ENCODE measurements at regions of chr13 and their contacts with region 1.

Region 1: DNA sequence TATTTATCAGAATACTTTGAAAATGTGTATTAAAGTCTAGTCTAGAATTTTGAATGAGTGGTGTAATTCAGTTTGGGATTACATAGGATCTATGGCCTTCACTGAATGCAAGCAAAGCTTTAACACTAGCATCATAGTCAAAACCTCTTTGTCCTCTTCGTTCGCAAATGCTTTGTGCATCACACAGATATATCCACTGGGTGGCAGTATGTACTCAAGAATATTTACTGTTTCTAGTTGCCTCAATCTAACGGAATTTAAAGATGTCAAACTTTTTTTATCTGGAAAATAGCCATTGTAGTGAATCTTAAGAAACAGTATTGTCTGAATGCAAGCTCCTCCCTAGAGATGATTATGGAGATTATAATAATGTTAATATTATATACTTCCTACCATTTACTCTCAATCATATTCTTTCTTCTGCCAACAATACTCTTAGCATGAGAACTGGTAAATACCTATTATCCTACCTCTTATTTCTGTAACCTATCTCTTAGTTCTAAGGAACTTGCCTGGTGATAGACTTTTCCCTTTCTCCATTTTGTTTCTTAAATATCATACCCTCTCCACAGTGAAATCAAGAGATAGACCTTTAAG is 25.8 kb downstream of the LACC1 start:
- DNase-seq: no peak

Region 2: DNA sequence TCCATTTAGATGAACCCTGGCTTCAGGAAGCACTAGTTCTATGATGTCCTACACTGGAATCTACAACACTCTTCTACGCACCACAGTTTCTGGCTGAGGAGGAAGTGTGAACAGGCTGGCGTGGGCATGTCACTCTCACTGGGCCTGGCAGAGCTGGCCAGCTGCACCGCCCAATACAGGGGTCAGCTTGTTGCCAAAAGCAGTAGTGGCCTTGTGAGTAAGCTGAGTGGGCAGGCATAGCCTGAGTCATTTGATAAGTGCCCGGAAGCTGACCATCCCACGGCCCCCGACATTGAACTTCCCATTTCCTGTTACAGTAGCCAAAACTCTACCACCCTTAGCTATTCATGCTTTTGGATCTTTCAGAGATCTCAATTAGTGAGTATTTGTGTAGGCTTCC is 227.2 kb after region 1 on chr13:
- intact Hi-C with region 1: loop called (anchors 10 kb)
- DNase-seq: peak; percentile 84

Region 3: GRCh38 chr13:44470638-44471562 is 565.4 kb after region 1 on chr13:
- intact Hi-C with region 1: loop called (anchors 5 kb)
- DNase-seq: no peak